H1 (cell line): ENCODE measurements at regions of chr5 and their contacts with region 1.

Region 1: GRCh38 chr5:1479581-1480188 is 34.4 kb upstream of the SLC6A3 start:
- DNase-seq: peak in 1 of 2 experiments; percentile 76
- H3K4me3 ChIP-seq: no peak overlapping the region
- H3K27ac ChIP-seq: no peak overlapping the region
- H3K4me1 ChIP-seq: peaks cover 0 to 4% (median under 1%) of the 10 kb centered on the region in 4 experiments; a peak in 2 of 7 replicates
- H3K27me3 ChIP-seq: no peaks in the 10 kb centered on the region
- CTCF ChIP-seq: peak in 2 of 3 experiments; percentile 79 to 81; a peak in 3 of 4 replicates
- EP300 ChIP-seq: no peak
- POLR2A ChIP-seq: 0 out of 3 replicates have a peak, but pooled peaks of 1 of the 2 experiments have one; percentile 25
- RAD21 ChIP-seq: peak; percentile 62 to 76

Region 2: DNA sequence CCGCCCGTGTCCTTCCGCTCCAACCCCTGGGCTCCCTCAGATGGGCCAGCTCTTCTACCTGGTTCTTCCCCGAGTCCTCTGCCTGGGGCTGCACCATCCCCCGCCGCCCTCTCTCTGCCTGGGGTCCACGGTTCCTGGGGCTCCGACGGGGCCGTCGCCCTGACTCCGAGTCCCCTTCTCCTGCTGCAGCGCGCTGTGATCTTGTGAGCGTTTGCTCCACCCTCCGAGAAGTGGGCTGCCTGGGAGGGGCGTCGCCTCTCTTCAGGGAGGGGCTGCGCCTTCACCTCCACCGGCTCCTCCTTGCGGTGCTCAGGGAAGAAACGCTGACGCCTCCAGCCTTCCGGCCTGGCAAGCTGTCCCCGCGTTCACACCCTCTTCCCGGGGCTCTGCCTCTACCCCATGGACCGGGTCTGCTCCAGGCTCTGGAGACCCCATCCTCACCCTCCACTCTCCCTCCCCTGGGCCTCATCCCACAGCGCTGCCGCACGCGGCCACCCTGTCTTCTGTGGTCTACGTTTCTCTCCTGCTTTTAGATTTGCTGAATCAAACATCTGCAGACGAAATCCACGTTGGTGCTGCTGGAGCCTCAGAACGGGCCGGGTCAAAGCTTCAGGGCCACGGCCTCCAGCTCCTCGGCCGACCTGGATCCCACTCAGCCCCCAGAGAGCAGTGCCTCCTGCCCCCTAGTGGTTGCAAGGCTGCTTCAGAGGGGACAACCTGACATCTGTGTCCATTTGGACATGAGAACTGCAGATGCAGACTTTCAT is 11.7 kb before region 1 on chr5:
- CTCF ChIA-PET with region 1: interaction called, 47 read pairs
- POLR2A ChIA-PET with region 1: interaction called, 3 read pairs
- DNase-seq: peak in 1 of 2 experiments; percentile 78
- H3K4me3 ChIP-seq: no peak overlapping the region
- H3K27ac ChIP-seq: no peak overlapping the region
- H3K4me1 ChIP-seq: no peaks in the 10 kb centered on the region
- H3K27me3 ChIP-seq: no peaks in the 10 kb centered on the region; a peak in 1 of 7 replicates
- CTCF ChIP-seq: peak in 2 of 3 experiments; percentile 85 to 91; a peak in 3 of 4 replicates
- EP300 ChIP-seq: no peak
- POLR2A ChIP-seq: no peak
- RAD21 ChIP-seq: peak; percentile 80 to 85

Region 3: DNA sequence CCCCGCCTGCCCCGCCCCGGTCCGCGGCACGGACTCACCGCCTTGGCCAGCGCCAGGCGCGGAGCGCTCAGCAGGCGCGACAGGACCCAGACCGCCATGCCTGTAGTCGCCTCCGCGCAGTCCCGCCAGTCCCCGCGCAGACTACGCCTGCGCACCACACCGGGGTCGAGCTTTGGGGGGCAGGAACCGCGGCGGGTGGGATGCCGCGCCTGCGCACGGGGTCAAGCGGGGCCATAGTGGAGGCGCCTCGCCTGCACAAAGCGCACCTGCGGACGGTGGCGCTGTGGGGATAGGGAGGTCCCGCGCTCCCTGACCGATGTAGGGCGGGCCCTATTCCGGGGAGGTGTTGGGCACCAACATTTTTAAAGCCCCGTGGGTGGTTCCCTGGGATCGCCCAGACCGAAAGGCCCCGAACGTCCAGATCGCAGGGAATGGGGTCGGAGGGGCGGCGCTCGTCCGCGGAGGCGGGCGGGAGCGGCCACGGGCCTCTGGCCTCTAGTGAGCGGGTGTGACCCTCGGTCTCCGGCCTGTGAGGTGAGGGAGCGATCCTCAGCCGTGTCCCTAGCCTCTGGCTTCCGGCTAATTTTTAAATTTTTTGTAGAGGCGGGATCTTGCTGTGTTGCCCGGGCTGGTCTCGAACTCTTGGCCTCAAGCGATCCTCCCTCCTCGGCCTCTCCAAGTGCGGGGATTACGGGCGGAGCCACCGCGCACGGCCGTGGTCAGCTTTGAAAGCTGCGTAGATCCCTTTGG is 114.8 kb after region 1 on chr5:
- CTCF ChIA-PET with region 1: interaction called, 15 read pairs
- POLR2A ChIA-PET with region 1: interaction called, 3 read pairs
- DNase-seq: peak; percentile 81 to 94
- H3K4me3 ChIP-seq: peak overlapping the region; percentile 61 to 82 (median 72)
- H3K27ac ChIP-seq: no peak overlapping the region
- H3K4me1 ChIP-seq: peaks cover 0 to 2% (median 0%) of the 10 kb centered on the region in 4 experiments; a peak in 2 of 7 replicates
- H3K27me3 ChIP-seq: no peaks in the 10 kb centered on the region
- CTCF ChIP-seq: peak; percentile 61 to 79 (median 63)
- EP300 ChIP-seq: no peak; a peak in 1 of 3 replicates
- POLR2A ChIP-seq: peak; percentile 34 to 40; a peak in 2 of 3 replicates
- RAD21 ChIP-seq: peak; percentile 5 to 43; a peak in 2 of 4 replicates

Region 4: GRCh38 chr5:1641560-1642166 is 162.0 kb after region 1 on chr5:
- CTCF ChIA-PET with region 1: interaction called, 41 read pairs
- POLR2A ChIA-PET with region 1: interaction called, 3 read pairs
- DNase-seq: peak in 1 of 2 experiments; percentile 68
- H3K4me3 ChIP-seq: peak overlapping the region in 1 of 4 experiments; percentile 32; a peak in 1 of 8 replicates
- H3K27ac ChIP-seq: no peak overlapping the region
- H3K4me1 ChIP-seq: peaks cover 2 to 28% (median 8%) of the 10 kb centered on the region in 4 experiments
- H3K27me3 ChIP-seq: peaks cover 0 to 17% (median 11%) of the 10 kb centered on the region in 4 experiments; a peak in 6 of 7 replicates
- CTCF ChIP-seq: peak; percentile 73 to 98 (median 90)
- EP300 ChIP-seq: no peak
- POLR2A ChIP-seq: no peak
- RAD21 ChIP-seq: peak; percentile 76 to 79

Region 5: GRCh38 chr5:1685066-1685465 is 205.4 kb after region 1 on chr5:
- CTCF ChIA-PET with region 1: no interaction called
- POLR2A ChIA-PET with region 1: no interaction called
- DNase-seq: peak in 1 of 2 experiments; percentile 33
- H3K4me3 ChIP-seq: no peak overlapping the region
- H3K27ac ChIP-seq: no peak overlapping the region
- H3K4me1 ChIP-seq: no peaks in the 10 kb centered on the region
- H3K27me3 ChIP-seq: peaks cover 0 to 1% (median 0%) of the 10 kb centered on the region in 4 experiments; a peak in 1 of 7 replicates
- CTCF ChIP-seq: no peak
- EP300 ChIP-seq: no peak
- POLR2A ChIP-seq: no peak
- RAD21 ChIP-seq: no peak